Stomach (tissue), 19 donors: ENCODE measurements at regions of chr6 and their contacts with region 1.

Region 1: GRCh38 chr6:133184798-133185372 is 56.3 kb upstream of the EYA4 start:
- DNase-seq: peak in 1 of 2 donors; percentile 68
- H3K4me3 ChIP-seq: no peak overlapping the region
- H3K27ac ChIP-seq: no peak overlapping the region
- H3K4me1 ChIP-seq: no peaks in the 10 kb centered on the region
- H3K27me3 ChIP-seq: no peaks in the 10 kb centered on the region
- CTCF ChIP-seq: peak in 3 of 7 experiments; percentile 23 to 55 (median 35)
- EP300 ChIP-seq: no peak
- POLR2A ChIP-seq: no peak

Region 2: DNA sequence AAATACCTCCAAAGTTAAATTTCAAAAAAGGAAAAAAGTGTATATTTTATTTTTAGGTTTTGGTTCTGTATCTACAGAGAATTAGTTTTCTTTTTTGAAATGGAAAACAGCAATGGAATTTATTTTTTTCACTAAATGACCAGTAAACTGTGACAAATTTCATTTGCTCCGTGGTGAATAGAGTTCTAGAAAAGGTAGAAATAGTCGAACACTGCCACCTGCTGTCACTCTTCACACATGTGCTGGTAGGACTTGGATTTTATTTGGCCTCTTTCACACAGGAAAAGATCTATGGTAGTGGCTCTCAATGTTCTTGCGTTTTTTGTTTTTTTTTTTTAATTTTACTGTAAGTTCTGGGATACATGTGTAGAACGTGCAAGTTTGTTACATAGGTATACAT is 368.8 kb after region 1 on chr6:
- intact Hi-C with region 1: loop called (anchors 10 kb)
- DNase-seq: peak; percentile 54 to 85
- H3K4me3 ChIP-seq: no peak overlapping the region
- H3K27ac ChIP-seq: no peak overlapping the region
- H3K4me1 ChIP-seq: peaks cover 4 to 17% (median 11%) of the 10 kb centered on the region in 4 donors
- H3K27me3 ChIP-seq: no peaks in the 10 kb centered on the region
- CTCF ChIP-seq: peak in 5 of 7 experiments; percentile 40 to 76 (median 48)
- EP300 ChIP-seq: no peak
- POLR2A ChIP-seq: no peak